ENCODE measurements at regions of chr9 and their contacts with region 1.

Region 1: DNA sequence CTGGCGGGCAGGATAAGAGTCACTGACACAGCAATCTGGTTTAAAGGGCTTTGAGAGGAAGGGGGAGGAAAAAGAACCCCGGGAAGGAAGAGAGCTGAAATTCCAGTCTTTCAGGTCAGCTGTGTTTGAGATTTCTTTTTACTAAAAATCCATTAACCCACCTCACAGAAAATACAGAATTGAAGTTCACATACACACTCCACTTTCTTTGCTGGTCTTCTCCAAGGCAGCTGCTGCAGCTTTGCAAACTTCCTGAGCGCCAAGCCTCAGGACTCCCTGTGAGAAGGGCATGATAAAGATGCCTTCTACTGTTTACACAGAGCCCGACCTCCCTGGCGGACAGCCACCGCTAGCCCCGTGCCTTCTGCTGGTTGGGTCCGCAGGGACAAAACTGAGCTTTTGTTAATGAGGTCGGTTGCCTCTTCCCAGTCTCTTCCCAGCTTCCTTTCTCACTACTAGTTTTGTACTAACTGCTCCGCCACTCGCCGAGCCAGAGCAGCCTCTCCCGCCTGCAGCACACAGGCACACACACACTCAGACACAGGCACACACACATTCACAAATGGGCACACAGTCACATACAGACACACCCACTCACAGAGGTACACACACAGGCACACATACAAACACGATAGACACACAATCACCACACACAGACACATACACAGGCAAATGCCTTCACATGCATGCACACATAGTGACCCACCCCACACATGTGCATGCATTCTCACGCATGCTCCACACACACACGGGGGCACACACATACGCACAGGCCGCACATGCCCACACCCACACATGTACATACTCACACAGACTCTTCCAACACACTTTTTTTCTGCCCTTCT is at the start of gene FREM1:
- DNase-seq: peak; percentile 32
- H3K4me3 ChIP-seq: peak within 1 kb of the TSS; percentile 10 to 38 (median 18)
- H3K27ac ChIP-seq: peak within 1 kb of the TSS; percentile 53 to 74 (median 67)
- H3K4me1 ChIP-seq: peaks cover 0 to 47% (median 14%) of the 10 kb centered on the region in 4 donors
- H3K27me3 ChIP-seq: no peaks in the 10 kb centered on the region
- CTCF ChIP-seq: no peak
- EP300 ChIP-seq: no peak
- POLR2A ChIP-seq: no peak
- total RNA-seq, gene FREM1: 2.2 to 12.7 (median 5.7) TPM

Region 2: GRCh38 chr9:14415947-14416346 is 494.2 kb before region 1 on chr9:
- in situ Hi-C with region 1: no loop called
- intact Hi-C with region 1: no loop called
- DNase-seq: no peak
- H3K4me3 ChIP-seq: no peak overlapping the region
- H3K27ac ChIP-seq: no peak overlapping the region
- H3K4me1 ChIP-seq: no peaks in the 10 kb centered on the region
- H3K27me3 ChIP-seq: no peaks in the 10 kb centered on the region
- CTCF ChIP-seq: no peak
- EP300 ChIP-seq: no peak
- POLR2A ChIP-seq: no peak

Region 3: DNA sequence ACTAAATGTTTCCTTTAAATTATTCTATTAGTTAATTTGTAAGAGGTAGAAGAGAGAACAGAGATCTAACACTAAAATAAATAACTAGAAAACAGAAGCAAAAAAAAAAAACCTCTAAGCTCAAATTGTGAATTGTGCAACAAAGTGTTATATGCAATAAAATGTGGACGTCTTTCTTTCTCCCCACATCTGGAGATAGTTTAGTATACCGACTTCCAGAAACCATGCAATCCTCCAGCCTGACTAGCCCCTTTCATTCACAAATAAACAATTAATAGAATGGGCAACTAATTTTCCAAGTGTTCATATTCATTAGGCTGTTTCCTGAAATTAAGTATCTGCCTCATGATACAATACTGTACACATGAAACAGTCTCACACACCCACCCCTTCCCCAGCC is 1701.8 kb after region 1 on chr9:
- in situ Hi-C with region 1: no loop called
- intact Hi-C with region 1: loop called (anchors 5 kb)
- DNase-seq: no peak
- H3K4me3 ChIP-seq: no peak overlapping the region
- H3K27ac ChIP-seq: no peak overlapping the region
- H3K4me1 ChIP-seq: no peaks in the 10 kb centered on the region
- H3K27me3 ChIP-seq: no peaks in the 10 kb centered on the region
- CTCF ChIP-seq: no peak
- EP300 ChIP-seq: no peak
- POLR2A ChIP-seq: no peak

Measured in transverse colon (tissue), 4 donors.